ENCODE measurements at regions of chr11 and their contacts with region 1.

Region 1: DNA sequence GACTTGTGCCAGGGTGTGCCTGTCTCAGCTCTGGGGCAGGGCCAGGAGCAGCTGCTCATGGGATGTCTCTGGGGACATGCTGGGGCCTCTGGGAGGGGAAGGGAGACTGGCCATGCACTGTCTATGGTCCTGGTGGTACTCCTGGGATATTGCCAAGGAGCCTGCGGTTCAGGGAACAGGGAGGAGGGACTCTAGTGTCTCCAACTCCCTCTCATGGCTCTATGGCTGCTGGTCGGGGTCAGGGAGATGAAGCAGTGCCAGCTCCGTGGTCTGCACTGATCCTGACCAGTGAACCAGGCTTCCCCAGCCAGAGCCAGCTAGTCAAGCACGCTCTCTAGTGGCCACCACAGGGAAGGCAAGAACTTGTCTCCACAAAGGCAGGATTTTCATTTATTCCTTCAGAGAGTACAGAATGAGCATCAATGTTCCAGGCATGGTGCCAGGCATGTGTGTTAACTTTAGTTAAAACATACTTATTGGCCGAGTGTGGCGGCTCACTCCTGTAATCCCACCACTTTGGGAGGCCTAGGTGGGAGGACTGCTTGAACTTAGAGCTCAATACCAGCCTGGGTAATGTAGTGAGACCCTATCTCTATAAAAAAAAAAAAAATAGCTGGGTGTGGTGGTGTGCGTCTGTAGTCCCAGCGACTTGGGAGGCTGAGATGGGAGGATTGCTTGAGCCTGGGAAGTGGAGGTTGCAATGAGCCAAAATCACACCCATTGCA is 2.5 kb upstream of the BEST1 start:
- DNase-seq: peak; percentile 75 to 91 (median 86)
- ATAC-seq: peak; percentile 67 to 90 (median 85)
- H3K4me3 ChIP-seq: no peak overlapping the region
- H3K27ac ChIP-seq: no peak overlapping the region
- H3K4me1 ChIP-seq: peaks cover 11 to 18% (median 17%) of the 10 kb centered on the region in 3 donors
- H3K27me3 ChIP-seq: no peaks in the 10 kb centered on the region
- CTCF ChIP-seq: peak; percentile 73 to 76 (median 74)

Region 2: GRCh38 chr11:62054484-62055121 is 107.0 kb after region 1 on chr11:
- intact Hi-C with region 1: loop called in 1 of 3 experiments (anchors 10 kb)
- DNase-seq: peak in 2 of 6 donors; percentile 49 to 56
- ATAC-seq: peak in 2 of 4 donors; percentile 52 to 66
- H3K4me3 ChIP-seq: no peak overlapping the region
- H3K27ac ChIP-seq: no peak overlapping the region
- H3K4me1 ChIP-seq: no peaks in the 10 kb centered on the region
- H3K27me3 ChIP-seq: no peaks in the 10 kb centered on the region
- CTCF ChIP-seq: peak in 1 of 4 donors; percentile 22

Measured in pancreas (tissue), 10 donors.